CD14-positive monocyte (primary cell): ENCODE measurements at regions of chr12 and their contacts with region 1.

Region 1: DNA sequence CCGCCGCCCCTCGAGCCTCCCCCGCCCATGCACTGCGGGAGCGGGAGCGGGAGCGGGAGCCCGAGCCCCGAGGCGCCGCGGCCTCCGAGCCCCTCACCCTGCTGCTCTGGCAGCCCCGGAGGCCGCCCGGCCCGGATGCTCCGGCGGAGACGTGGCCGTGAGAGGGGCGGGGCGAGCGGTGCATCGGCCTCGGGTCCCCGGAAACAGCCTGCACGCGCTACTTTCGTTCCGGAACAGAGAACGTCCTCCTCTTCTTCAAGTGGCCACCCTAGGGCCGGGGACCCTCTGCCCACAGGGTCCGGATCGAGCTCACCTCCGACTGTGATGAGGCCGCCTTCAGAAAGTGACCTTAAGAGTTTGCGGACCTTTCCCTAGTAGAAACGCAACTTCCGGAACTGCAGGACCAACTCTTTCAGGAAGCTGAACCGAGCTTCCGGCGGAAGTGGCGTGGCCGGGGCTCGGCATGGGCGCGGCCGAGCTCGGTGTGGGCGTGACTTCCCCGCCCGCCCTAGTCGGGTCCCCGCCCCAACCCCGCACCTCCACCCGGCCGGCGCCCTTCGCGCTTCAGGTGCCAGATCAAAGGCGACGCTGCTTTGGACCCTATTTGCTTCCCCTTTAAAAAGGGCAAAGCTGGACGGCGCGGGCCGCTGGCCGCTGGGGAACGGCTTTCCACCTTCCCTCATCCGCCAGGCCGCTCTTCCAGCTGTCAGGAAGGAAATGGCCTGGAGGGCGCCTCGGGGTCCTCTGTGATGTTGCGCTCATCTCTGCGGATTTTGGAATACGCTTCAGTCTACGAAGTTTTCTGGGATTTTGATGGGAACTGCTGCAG is at the start of gene GOLGA3:
- DNase-seq: peak; percentile 91 to 95 (median 94)
- H3K4me3 ChIP-seq: peak within 1 kb of the TSS; percentile 57 to 94 (median 82)
- H3K4me3 Mint-ChIP-seq: peak within 1 kb of the TSS; percentile 82 to 94
- H3K27ac ChIP-seq: peak within 1 kb of the TSS; percentile 87 to 100
- H3K27ac Mint-ChIP-seq: peak within 1 kb of the TSS; percentile 99 to 100 (median 100)
- H3K4me1 ChIP-seq: peaks cover 17 to 22% of the 10 kb centered on the region in 2 donors
- H3K4me1 Mint-ChIP-seq: peaks cover 23% of the 10 kb centered on the region
- H3K27me3 ChIP-seq: no peaks in the 10 kb centered on the region
- H3K27me3 Mint-ChIP-seq: peaks cover 0 to 3% (median 1%) of the 10 kb centered on the region in 3 donors
- CTCF ChIP-seq: no peak
- polyA plus RNA-seq, gene GOLGA3: 1.2 to 12.0 (median 2.4) TPM

Region 2: DNA sequence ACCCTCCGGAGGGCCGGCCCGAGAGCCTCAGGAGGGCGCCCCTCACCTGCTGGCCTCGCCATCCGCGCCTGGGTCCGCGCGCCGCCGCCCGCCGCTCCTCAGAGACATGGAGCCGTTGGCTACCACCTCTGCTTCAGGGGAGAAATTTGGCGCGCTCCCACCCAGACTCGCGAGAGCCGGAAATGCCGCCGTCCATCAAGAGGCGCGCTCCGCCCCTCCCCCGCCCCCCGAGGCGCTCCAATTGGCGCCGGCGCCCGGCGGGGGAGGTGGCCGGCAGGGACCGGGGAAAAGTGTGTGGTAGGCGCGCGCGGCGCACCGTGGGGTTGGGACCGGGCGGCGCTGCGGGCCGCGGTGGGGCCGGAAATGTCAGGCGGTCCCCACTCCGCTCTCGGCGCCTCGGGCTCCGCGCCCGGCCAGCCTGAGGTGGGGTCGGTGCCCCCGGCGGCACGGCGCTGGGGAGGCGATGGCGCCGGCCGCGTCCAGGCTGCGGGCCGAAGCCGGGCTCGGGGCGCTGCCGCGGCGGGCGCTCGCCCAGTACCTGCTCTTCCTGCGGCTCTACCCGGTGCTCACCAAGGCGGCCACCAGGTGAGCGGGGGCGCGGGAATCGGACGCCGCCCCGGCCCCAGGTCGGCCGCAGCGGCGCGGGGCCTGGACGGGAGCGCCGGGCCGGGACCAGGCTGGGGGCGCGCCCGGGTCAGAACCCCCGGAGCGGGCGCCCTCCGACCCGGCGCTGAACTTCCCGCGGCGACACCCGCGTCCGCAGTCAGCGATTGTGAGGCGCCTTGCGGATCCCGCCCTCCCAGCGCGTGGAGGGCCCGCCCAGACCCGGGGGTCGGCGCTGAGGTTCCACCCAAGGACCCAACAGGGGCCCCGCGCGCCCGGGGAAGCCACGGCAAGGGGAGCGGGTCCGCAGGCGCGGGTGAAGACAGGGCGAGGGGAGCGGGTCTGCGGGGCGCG is 141.4 kb before region 1 on chr12 and contains the starts of genes POLE and PXMP2:
- intact Hi-C with region 1: loop called in 1 of 2 experiments (anchors 10 kb)
- DNase-seq: peak; percentile 84 to 89 (median 87)
- H3K4me3 ChIP-seq: peak within 1 kb of the TSS; percentile 38 to 80 (median 66)
- H3K4me3 Mint-ChIP-seq: peak within 1 kb of the TSS; percentile 81 to 85
- H3K27ac ChIP-seq: no peak within 1 kb of the TSS
- H3K27ac Mint-ChIP-seq: peak within 1 kb of the TSS in 1 of 7 donors; percentile 46
- H3K4me1 ChIP-seq: peaks cover 6 to 23% of the 10 kb centered on the region in 2 donors
- H3K4me1 Mint-ChIP-seq: peaks cover 19% of the 10 kb centered on the region
- H3K27me3 ChIP-seq: peaks cover 0 to 2% of the 10 kb centered on the region in 2 donors
- H3K27me3 Mint-ChIP-seq: peaks cover 3 to 12% (median 9%) of the 10 kb centered on the region in 3 donors
- CTCF ChIP-seq: no peak
- polyA plus RNA-seq, gene POLE: 1.00 to 24.2 (median 2.2) TPM
- polyA plus RNA-seq, gene PXMP2: 2.9 to 9.2 (median 8.7) TPM

Region 3: GRCh38 chr12:132734206-132734605 is 94.7 kb before region 1 on chr12:
- intact Hi-C with region 1: no loop called
- DNase-seq: no peak
- H3K4me3 ChIP-seq: no peak overlapping the region
- H3K4me3 Mint-ChIP-seq: no peak overlapping the region
- H3K27ac ChIP-seq: no peak overlapping the region
- H3K27ac Mint-ChIP-seq: no peak overlapping the region
- H3K4me1 ChIP-seq: no peaks in the 10 kb centered on the region
- H3K4me1 Mint-ChIP-seq: no peaks in the 10 kb centered on the region
- H3K27me3 ChIP-seq: no peaks in the 10 kb centered on the region
- H3K27me3 Mint-ChIP-seq: peaks cover 0 to 3% (median 0%) of the 10 kb centered on the region in 3 donors
- CTCF ChIP-seq: no peak

Region 4: DNA sequence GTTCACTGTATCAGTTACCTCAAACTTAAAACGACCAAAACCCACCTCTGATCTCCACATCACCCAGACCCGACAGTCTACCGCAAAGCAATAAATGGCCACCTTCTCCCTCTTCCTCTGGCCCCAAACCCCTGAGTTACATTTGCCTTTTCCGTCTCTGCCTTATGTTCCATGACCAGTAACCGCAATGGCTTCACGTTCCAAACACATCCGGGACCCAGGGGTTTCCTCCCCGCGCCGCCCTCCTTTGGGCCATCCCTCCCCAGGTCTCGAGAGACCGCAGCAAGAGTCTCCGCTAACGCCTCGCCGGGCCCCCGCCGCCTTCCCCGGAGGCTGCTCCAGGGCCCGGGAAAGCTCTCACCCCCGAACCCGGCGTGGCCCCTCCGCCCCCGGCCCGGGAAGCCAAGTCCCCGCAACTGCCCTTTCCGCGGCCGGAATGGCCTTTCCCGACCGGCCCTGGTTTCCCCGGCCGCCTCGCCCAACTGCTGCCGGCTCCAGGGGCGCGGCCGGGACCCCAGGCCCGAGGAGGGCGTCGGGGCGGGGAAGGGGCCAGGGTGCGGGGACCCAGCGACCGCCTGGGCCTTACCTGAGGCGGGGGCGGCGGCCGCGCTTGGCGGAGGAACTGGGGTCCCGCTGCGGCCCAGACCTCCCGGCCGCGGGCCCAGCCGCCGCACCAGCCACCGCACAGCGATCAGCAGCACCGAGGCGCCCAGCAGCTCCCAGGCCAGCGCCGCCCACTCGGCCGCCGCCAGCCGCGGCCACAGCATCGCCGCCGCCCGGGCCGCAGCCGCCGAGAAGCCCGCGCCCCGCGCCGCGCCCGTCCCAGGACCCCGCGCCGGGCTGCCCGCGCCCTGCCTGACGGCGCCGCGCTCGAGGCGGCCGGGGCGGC is 67.6 kb before region 1 on chr12 and contains the start of gene ANKLE2:
- intact Hi-C with region 1: loop called (anchors 5 kb)
- DNase-seq: peak in 2 of 3 donors; percentile 37 to 48
- H3K4me3 ChIP-seq: peak within 1 kb of the TSS; percentile 83 to 95 (median 84)
- H3K4me3 Mint-ChIP-seq: peak within 1 kb of the TSS; percentile 84 to 97
- H3K27ac ChIP-seq: peak within 1 kb of the TSS; percentile 85 to 91
- H3K27ac Mint-ChIP-seq: peak within 1 kb of the TSS; percentile 92 to 97 (median 94)
- H3K4me1 ChIP-seq: peaks cover 27 to 40% of the 10 kb centered on the region in 2 donors
- H3K4me1 Mint-ChIP-seq: peaks cover 30% of the 10 kb centered on the region
- H3K27me3 ChIP-seq: no peaks in the 10 kb centered on the region
- H3K27me3 Mint-ChIP-seq: peaks cover 0 to 2% (median 0%) of the 10 kb centered on the region in 3 donors
- CTCF ChIP-seq: no peak
- polyA plus RNA-seq, gene ANKLE2: 10.1 to 88.4 (median 15.0) TPM

Region 5: GRCh38 chr12:132872975-132873421 is 44.1 kb after region 1 on chr12:
- intact Hi-C with region 1: no loop called
- DNase-seq: no peak
- H3K4me3 ChIP-seq: no peak overlapping the region
- H3K4me3 Mint-ChIP-seq: no peak overlapping the region
- H3K27ac ChIP-seq: no peak overlapping the region
- H3K27ac Mint-ChIP-seq: no peak overlapping the region
- H3K4me1 ChIP-seq: no peaks in the 10 kb centered on the region
- H3K4me1 Mint-ChIP-seq: no peaks in the 10 kb centered on the region
- H3K27me3 ChIP-seq: no peaks in the 10 kb centered on the region
- H3K27me3 Mint-ChIP-seq: no peaks in the 10 kb centered on the region
- CTCF ChIP-seq: no peak

Region 6: GRCh38 chr12:132887513-132888351 is 58.8 kb after region 1 on chr12 and contains the start of gene CHFR:
- intact Hi-C with region 1: loop called (anchors 5 kb)
- DNase-seq: peak; percentile 98 to 99 (median 99)
- H3K4me3 ChIP-seq: peak within 1 kb of the TSS; percentile 85 to 92 (median 86)
- H3K4me3 Mint-ChIP-seq: peak within 1 kb of the TSS; percentile 97 to 98
- H3K27ac ChIP-seq: peak within 1 kb of the TSS; percentile 89 to 99
- H3K27ac Mint-ChIP-seq: peak within 1 kb of the TSS; percentile 98 to 100 (median 99)
- H3K4me1 ChIP-seq: peaks cover 10 to 15% of the 10 kb centered on the region in 2 donors
- H3K4me1 Mint-ChIP-seq: peaks cover 19% of the 10 kb centered on the region
- H3K27me3 ChIP-seq: no peaks in the 10 kb centered on the region
- H3K27me3 Mint-ChIP-seq: peaks cover 3 to 10% (median 8%) of the 10 kb centered on the region in 3 donors
- CTCF ChIP-seq: no peak
- polyA plus RNA-seq, gene CHFR: 28.0 to 76.3 (median 39.3) TPM